ENCODE measurements at regions of chr2 and their contacts with region 1.

Region 1: GRCh38 chr2:218395797-218396687 is 3.6 kb upstream of the CTDSP1 start:
- DNase-seq: peak; percentile 97 to 98
- ATAC-seq: peak; percentile 81
- H3K4me3 ChIP-seq: peak overlapping the region; percentile 56 to 88
- H3K27ac ChIP-seq: peak overlapping the region; percentile 91 to 97
- H3K4me1 ChIP-seq: no peaks in the 10 kb centered on the region
- H3K27me3 ChIP-seq: no peaks in the 10 kb centered on the region

Region 2: GRCh38 chr2:218186355-218186766 is 209.7 kb before region 1 on chr2:
- intact Hi-C with region 1: loop called in 1 of 2 experiments (anchors 10 kb)
- DNase-seq: peak; percentile 70 to 83
- ATAC-seq: peak; percentile 89
- H3K4me3 ChIP-seq: no peak overlapping the region
- H3K27ac ChIP-seq: no peak overlapping the region
- H3K4me1 ChIP-seq: peaks cover 0 to 3% of the 10 kb centered on the region in 2 donors
- H3K27me3 ChIP-seq: no peaks in the 10 kb centered on the region

Region 3: DNA sequence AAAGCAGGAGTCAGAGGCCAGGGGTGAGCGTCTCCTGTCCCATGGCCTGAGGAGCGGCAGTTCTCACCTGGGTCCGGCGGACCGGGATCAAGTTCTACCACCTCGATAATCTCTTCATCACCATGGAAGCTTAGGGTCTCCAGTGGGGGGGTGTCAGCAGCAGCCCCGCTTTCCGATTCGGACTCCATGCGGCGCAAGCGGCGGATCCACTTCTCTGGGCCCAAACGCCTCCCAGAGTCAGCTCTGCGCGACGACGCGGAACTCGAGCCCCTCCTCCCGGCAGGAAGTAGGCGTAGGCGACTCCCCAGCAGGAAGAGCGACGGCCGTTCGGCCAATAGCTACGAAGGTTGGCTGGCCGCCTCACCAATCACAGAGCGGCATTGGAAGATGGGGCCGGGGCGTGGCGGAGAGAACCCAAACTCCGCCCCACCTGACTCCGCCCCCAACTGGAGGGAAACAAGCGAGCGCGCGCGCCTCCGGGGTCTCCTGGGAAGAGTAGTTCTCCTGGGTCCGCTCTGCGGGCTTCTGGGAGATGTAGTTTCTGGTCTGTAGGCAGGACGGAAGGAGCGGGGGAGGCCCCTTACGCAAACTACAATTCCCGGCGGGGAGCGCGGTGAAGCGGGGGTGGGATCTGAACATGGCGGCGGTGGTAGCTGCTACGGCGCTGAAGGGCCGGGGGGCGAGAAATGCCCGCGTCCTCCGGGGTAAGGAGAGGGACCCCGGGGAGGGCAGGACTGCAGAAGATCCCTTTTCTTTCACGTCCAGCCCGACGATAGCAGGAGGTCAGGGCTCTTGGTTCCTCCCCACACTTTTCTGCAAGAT is 125.9 kb before region 1 on chr2 and contains the starts of genes AAMP and PNKD:
- intact Hi-C with region 1: loop called in 1 of 2 experiments (anchors 1 kb)
- DNase-seq: peak; percentile 100
- ATAC-seq: peak; percentile 97
- H3K4me3 ChIP-seq: peak within 1 kb of the TSS; percentile 74 to 92
- H3K27ac ChIP-seq: peak within 1 kb of the TSS in 1 of 2 donors; percentile 9
- H3K4me1 ChIP-seq: no peaks in the 10 kb centered on the region
- H3K27me3 ChIP-seq: no peaks in the 10 kb centered on the region
- total RNA-seq, gene AAMP: 50.8 to 54.7 TPM
- total RNA-seq, gene PNKD: 26.9 to 40.2 TPM

Region 4: GRCh38 chr2:218301176-218301819 is 94.7 kb before region 1 on chr2:
- intact Hi-C with region 1: loop called (anchors 2 to 5 kb)
- DNase-seq: peak; percentile 87 to 88
- ATAC-seq: peak; percentile 87
- H3K4me3 ChIP-seq: no peak overlapping the region
- H3K27ac ChIP-seq: no peak overlapping the region
- H3K4me1 ChIP-seq: peaks cover 0 to 2% of the 10 kb centered on the region in 2 donors
- H3K27me3 ChIP-seq: no peaks in the 10 kb centered on the region

Region 5: GRCh38 chr2:218370410-218371063 is 25.5 kb before region 1 on chr2:
- intact Hi-C with region 1: loop called in 1 of 2 experiments (anchors 2 kb)
- DNase-seq: peak in 1 of 2 donors; percentile 78
- ATAC-seq: no peak
- H3K4me3 ChIP-seq: no peak overlapping the region
- H3K27ac ChIP-seq: peak overlapping the region in 1 of 2 donors; percentile 17
- H3K4me1 ChIP-seq: no peaks in the 10 kb centered on the region
- H3K27me3 ChIP-seq: no peaks in the 10 kb centered on the region